Mammary epithelial cell (primary cell): ENCODE measurements at regions of chr17 and their contacts with region 1.

Region 1: GRCh38 chr17:27993723-27994310 is 48.7 kb upstream of the NLK start:
- DNase-seq: no peak
- H3K4me3 ChIP-seq: no peak overlapping the region
- H3K27ac ChIP-seq: no peak overlapping the region
- H3K4me1 ChIP-seq: peaks cover 18% of the 10 kb centered on the region
- H3K27me3 ChIP-seq: no peaks in the 10 kb centered on the region
- CTCF ChIP-seq: no peak

Region 2: GRCh38 chr17:27879987-27880608 is 113.7 kb before region 1 on chr17:
- CTCF ChIA-PET with region 1: no interaction called
- dilution Hi-C with region 1: no loop called
- in situ Hi-C with region 1: no loop called
- intact Hi-C with region 1: no loop called
- DNase-seq: peak; percentile 48
- H3K4me3 ChIP-seq: no peak overlapping the region
- H3K27ac ChIP-seq: no peak overlapping the region
- H3K4me1 ChIP-seq: no peaks in the 10 kb centered on the region
- H3K27me3 ChIP-seq: no peaks in the 10 kb centered on the region
- CTCF ChIP-seq: peak; percentile 92 to 94

Region 3: GRCh38 chr17:28033972-28034714 is 40.3 kb after region 1 on chr17:
- CTCF ChIA-PET with region 1: no interaction called
- dilution Hi-C with region 1: no loop called
- in situ Hi-C with region 1: no loop called
- intact Hi-C with region 1: no loop called
- DNase-seq: peak; percentile 39
- H3K4me3 ChIP-seq: no peak overlapping the region
- H3K27ac ChIP-seq: no peak overlapping the region
- H3K4me1 ChIP-seq: peaks cover 8% of the 10 kb centered on the region
- H3K27me3 ChIP-seq: no peaks in the 10 kb centered on the region
- CTCF ChIP-seq: no peak

Region 4: GRCh38 chr17:28057731-28058279 is 64.0 kb after region 1 on chr17:
- CTCF ChIA-PET with region 1: no interaction called
- dilution Hi-C with region 1: no loop called
- in situ Hi-C with region 1: loop called in 1 of 2 experiments (anchors 10 kb)
- intact Hi-C with region 1: no loop called
- DNase-seq: peak; percentile 64
- H3K4me3 ChIP-seq: no peak overlapping the region
- H3K27ac ChIP-seq: no peak overlapping the region
- H3K4me1 ChIP-seq: peaks cover 7% of the 10 kb centered on the region
- H3K27me3 ChIP-seq: no peaks in the 10 kb centered on the region
- CTCF ChIP-seq: no peak